ENCODE measurements at regions of chr6 and their contacts with region 1.

Region 1: GRCh38 chr6:3732345-3733141 is 19.0 kb downstream of the PXDC1 start:
- DNase-seq: peak in 2 of 3 donors; percentile 51 to 55
- H3K4me3 ChIP-seq: no peak overlapping the region
- H3K27ac ChIP-seq: no peak overlapping the region
- H3K4me1 ChIP-seq: peaks cover 0 to 11% (median 6%) of the 10 kb centered on the region in 4 experiments
- H3K27me3 ChIP-seq: no peaks in the 10 kb centered on the region

Region 2: GRCh38 chr6:3281631-3282475 is 450.7 kb before region 1 on chr6:
- CTCF ChIA-PET with region 1: interaction called, 121 read pairs
- POLR2A ChIA-PET with region 1: interaction called, 3 read pairs
- DNase-seq: peak in 2 of 3 donors; percentile 14 to 35
- H3K4me3 ChIP-seq: no peak overlapping the region
- H3K27ac ChIP-seq: no peak overlapping the region
- H3K4me1 ChIP-seq: peaks cover 0 to 7% (median 0%) of the 10 kb centered on the region in 4 experiments
- H3K27me3 ChIP-seq: no peaks in the 10 kb centered on the region

Region 3: GRCh38 chr6:3410385-3411360 is 321.9 kb before region 1 on chr6:
- CTCF ChIA-PET with region 1: interaction called, 12 read pairs
- POLR2A ChIA-PET with region 1: no interaction called
- DNase-seq: peak; percentile 83 to 90 (median 90)
- H3K4me3 ChIP-seq: no peak overlapping the region
- H3K27ac ChIP-seq: no peak overlapping the region
- H3K4me1 ChIP-seq: peaks cover 0 to 15% (median 7%) of the 10 kb centered on the region in 4 experiments
- H3K27me3 ChIP-seq: peaks cover 0 to 2% (median 0%) of the 10 kb centered on the region in 5 experiments